Heart right ventricle (tissue), 16 donors: ENCODE measurements at regions of chr12 and their contacts with region 1.

Region 1: GRCh38 chr12:52156736-52157565 is 34.9 kb downstream of the KRT80 start:
- DNase-seq: peak; percentile 77 to 82
- ATAC-seq: peak; percentile 61 to 87 (median 66)
- H3K4me3 ChIP-seq: no peak overlapping the region
- H3K27ac ChIP-seq: no peak overlapping the region
- H3K4me1 ChIP-seq: peaks cover 5 to 16% (median 9%) of the 10 kb centered on the region in 9 donors
- H3K27me3 ChIP-seq: peaks cover 0 to 8% (median 0%) of the 10 kb centered on the region in 7 donors
- CTCF ChIP-seq: peak; percentile 83 to 99 (median 96)

Region 2: DNA sequence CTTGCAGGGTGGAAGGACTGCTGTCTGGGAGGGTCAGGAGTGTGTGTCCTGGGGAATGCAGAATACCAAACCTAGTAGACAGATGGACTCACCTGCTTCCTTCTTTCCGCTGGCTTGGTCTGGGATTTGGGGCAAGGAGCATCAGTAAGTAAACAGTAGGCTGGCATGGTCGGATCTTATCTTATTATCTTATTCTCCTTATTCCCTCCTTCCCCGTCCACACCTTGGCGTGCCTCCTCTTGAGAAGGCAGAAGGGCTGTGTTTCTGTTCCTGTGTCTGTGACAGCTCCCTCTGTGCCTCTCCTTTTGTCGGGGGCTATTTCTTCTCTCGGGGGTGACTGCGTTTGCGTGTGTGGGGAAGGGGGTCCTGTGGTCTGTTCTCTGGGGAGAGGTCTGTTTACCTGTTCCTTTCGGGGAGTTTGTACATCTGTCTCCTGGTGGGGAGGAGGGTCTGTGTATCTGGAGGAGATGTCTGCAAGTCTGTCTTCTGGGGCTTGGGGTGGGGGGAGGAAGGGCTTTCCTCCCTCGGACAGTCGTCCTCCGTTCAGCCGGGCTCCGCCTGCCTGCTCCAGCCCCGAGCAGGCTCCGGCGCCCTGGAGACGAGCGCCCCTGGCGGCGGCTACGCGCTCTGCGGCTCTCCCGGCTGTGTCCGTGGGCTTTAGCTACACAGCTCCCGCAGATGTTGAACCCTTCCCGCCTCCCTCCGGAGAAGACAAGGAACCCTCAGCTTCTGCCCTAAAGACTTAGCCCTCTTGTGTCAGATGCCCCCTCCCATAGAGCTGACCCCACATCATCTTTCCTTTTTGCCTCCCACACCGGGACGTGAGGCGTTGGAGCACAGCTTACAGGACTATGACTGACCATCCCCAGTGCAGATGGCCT is 121.8 kb after region 1 on chr12:
- intact Hi-C with region 1: loop called in 2 of 10 experiments (anchors 5 kb)
- DNase-seq: peak; percentile 62 to 82
- ATAC-seq: peak; percentile 88 to 96 (median 92)
- H3K4me3 ChIP-seq: no peak overlapping the region
- H3K27ac ChIP-seq: no peak overlapping the region
- H3K4me1 ChIP-seq: peaks cover 0 to 32% (median 10%) of the 10 kb centered on the region in 9 donors
- H3K27me3 ChIP-seq: peaks cover 0 to 49% (median 24%) of the 10 kb centered on the region in 7 donors
- CTCF ChIP-seq: peak; percentile 91 to 99 (median 98)

Region 3: GRCh38 chr12:52327052-52327829 is 170.3 kb after region 1 on chr12:
- intact Hi-C with region 1: loop called (anchors 2 to 10 kb)
- DNase-seq: peak; percentile 53 to 61
- ATAC-seq: peak; percentile 63 to 90 (median 83)
- H3K4me3 ChIP-seq: no peak overlapping the region
- H3K27ac ChIP-seq: no peak overlapping the region
- H3K4me1 ChIP-seq: no peaks in the 10 kb centered on the region
- H3K27me3 ChIP-seq: peaks cover 0 to 37% (median 15%) of the 10 kb centered on the region in 7 donors
- CTCF ChIP-seq: peak; percentile 33 to 87 (median 71)

Region 4: DNA sequence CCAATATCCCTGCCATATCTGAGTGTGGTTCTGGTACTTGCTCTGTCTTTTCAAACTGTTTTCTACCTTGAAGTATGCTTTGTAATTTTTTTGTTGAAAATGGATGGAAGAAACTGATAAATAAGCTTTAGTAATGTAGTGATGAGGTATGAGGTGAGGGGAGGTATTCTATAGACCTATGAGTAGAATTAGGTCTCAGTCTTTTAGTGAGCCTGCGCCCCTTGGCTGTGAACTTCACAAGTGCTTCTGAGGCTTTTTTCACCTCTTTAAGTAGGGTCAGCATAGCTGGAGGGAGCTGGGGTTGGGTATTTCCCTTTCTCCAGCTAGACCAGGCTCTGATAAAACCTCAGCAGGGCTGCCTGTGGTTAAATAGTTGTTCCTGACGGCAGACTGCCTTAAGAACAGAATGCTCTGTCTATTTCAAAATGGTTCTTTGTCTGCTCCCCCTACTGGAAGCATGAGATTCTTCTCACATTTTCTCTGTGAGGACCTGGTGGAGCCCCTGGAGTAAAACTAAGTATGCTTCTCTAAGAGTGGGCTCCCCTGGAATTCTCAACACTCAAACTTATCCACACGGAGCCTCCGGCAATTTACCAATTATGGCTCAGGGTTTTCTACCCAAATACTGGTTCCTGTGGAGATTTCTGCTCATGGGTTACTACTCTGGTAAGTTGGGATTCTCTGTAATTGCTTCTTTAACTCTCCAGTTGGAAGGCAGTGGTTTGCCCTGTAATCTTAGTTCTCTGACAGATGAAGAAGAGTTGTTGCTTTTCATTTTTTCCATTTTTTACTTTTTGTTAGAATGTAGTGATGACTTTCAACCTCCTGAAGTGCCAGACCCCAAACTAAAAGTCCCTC is 350.1 kb after region 1 on chr12:
- intact Hi-C with region 1: loop called in 7 of 10 experiments (anchors 5 to 10 kb)
- DNase-seq: no peak
- ATAC-seq: peak in 4 of 8 donors; percentile 31 to 62 (median 40)
- H3K4me3 ChIP-seq: no peak overlapping the region
- H3K27ac ChIP-seq: no peak overlapping the region
- H3K4me1 ChIP-seq: peaks cover 0 to 5% (median 0%) of the 10 kb centered on the region in 9 donors
- H3K27me3 ChIP-seq: peaks cover 0 to 36% (median 28%) of the 10 kb centered on the region in 7 donors
- CTCF ChIP-seq: peak; percentile 20 to 69 (median 55)

Region 5: DNA sequence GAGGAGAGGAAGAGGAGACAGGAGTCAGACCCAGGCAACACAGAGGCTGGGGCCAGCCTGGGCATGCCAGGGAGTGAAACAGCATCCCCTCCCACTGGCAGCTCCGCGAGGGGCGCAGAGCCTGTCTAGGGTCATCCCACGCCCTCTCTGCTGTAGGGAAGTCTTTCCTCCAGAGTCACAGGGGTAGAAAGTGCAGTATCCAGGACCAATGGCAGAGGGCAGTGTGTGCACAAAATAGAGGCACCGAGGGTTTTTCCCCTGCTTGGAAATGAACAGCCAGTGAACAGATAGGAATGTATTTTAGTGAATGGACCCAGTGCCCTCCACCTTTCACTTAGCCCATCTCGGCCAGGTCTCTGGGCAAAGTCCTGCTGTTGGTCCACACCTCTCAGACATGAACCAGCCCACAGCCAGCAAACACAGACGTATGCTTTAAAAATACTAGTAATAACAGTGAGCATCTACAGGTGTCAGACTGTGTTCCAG is 426.1 kb after region 1 on chr12:
- intact Hi-C with region 1: loop called in 2 of 10 experiments (anchors 5 kb)
- DNase-seq: peak in 1 of 2 donors; percentile 58
- ATAC-seq: peak; percentile 39 to 83 (median 77)
- H3K4me3 ChIP-seq: no peak overlapping the region
- H3K27ac ChIP-seq: no peak overlapping the region
- H3K4me1 ChIP-seq: no peaks in the 10 kb centered on the region
- H3K27me3 ChIP-seq: peaks cover 0 to 14% (median 6%) of the 10 kb centered on the region in 7 donors
- CTCF ChIP-seq: peak; percentile 43 to 73 (median 69)

Region 6: GRCh38 chr12:52879394-52880351 is 722.7 kb after region 1 on chr12:
- intact Hi-C with region 1: loop called (anchors 2 to 5 kb)
- DNase-seq: peak; percentile 76 to 89
- ATAC-seq: peak; percentile 85 to 93 (median 90)
- H3K4me3 ChIP-seq: peak overlapping the region in 8 of 10 donors; percentile 4 to 36 (median 24)
- H3K27ac ChIP-seq: no peak overlapping the region
- H3K4me1 ChIP-seq: peaks cover 0 to 20% (median 12%) of the 10 kb centered on the region in 9 donors
- H3K27me3 ChIP-seq: peaks cover 0 to 25% (median 17%) of the 10 kb centered on the region in 7 donors
- CTCF ChIP-seq: peak; percentile 58 to 77 (median 65)

Region 7: DNA sequence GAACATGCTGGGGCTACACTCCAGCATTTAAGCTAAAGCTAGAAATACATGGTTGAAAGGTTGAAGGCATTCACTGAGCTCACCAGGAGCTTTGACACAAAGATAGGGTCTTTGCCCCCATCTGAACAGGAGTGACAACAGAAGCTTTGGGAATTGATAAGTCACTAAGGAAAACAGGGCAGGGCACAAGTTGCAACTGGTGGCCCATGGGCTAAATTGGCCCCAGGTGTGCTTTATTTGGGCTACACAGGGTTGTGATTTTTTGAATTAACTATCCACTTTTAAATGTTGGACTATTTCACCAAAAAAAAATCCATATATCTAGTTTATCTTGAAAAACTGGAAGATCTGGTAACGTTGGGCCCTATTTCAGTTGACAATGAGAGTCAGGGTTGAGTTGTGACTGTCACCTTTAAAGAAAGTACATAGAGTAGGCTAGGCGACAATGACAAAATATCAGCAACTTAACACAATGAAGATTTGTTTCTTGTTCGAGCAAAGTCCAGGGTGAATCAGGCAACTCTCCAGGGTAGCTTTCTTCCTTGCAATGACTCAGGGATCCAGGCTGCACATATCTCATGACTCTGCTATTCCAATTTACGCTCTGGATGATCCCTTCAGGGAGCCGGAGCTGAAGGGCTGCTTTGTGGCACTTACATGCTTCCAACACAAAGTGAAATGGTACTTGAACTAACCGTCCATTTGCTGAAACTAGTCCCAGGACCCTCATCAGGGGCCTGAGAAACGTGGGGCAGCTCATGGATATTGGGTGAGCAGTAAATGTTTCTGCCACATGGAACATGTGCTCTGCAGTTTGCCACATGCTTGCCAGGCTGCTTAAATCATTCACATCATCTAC is 836.0 kb after region 1 on chr12:
- intact Hi-C with region 1: loop called in 3 of 10 experiments (anchors 5 to 10 kb)
- DNase-seq: no peak
- ATAC-seq: no peak
- H3K4me3 ChIP-seq: no peak overlapping the region
- H3K27ac ChIP-seq: no peak overlapping the region
- H3K4me1 ChIP-seq: no peaks in the 10 kb centered on the region
- H3K27me3 ChIP-seq: no peaks in the 10 kb centered on the region
- CTCF ChIP-seq: no peak